ENCODE measurements at regions of chr3 and their contacts with region 1.

Region 1: GRCh38 chr3:27449530-27450150 is 34.5 kb downstream of the SLC4A7 start:
- DNase-seq: no peak
- H3K4me3 ChIP-seq: no peak overlapping the region
- H3K27ac ChIP-seq: no peak overlapping the region
- H3K4me1 ChIP-seq: peaks cover 0 to 12% (median 0%) of the 10 kb centered on the region in 4 donors
- H3K27me3 ChIP-seq: no peaks in the 10 kb centered on the region
- CTCF ChIP-seq: no peak
- EP300 ChIP-seq: no peak
- POLR2A ChIP-seq: no peak

Region 2: DNA sequence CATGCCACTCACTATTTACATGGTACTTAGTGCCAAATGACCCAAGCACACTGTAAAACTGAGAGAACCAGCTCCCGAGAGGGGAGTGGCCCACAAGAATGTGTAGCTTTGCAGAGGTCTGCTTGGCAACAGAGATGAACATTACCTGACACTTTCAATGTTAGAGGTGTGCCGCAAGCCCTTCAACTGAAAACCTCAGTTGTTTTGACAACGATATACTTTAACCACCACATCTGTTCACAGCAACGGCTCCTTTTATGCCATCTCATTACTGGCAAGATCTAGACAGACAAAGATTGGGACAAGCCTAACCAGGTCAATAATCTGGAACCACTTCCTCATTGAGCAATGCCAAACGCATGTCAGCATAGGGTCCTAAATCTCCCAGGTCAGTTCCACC is 104.1 kb before region 1 on chr3:
- in situ Hi-C with region 1: no loop called
- intact Hi-C with region 1: no loop called
- DNase-seq: peak; percentile 58
- H3K4me3 ChIP-seq: no peak overlapping the region
- H3K27ac ChIP-seq: peak overlapping the region; percentile 5 to 49 (median 22)
- H3K4me1 ChIP-seq: peaks cover 0 to 14% (median 2%) of the 10 kb centered on the region in 4 donors
- H3K27me3 ChIP-seq: no peaks in the 10 kb centered on the region
- CTCF ChIP-seq: no peak
- EP300 ChIP-seq: peak; percentile 69
- POLR2A ChIP-seq: no peak

Region 3: DNA sequence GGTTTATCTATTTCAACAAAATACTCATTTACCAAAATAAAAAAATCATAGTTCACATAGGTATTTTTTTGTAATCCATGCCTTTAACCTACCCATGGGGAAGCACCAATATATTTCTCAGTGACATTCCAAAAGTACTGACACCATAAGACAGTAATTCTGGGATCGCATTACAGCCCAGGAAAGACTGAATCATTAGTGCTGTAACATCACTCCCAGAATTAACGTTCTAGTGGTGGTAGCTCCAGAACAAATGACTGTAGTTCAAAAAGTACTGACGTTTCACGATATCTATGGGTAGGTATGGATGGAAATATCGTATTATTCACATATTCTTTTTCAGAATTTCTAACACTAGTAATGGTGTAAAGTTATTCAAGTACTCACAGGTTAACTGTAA is 26.2 kb before region 1 on chr3:
- in situ Hi-C with region 1: no loop called
- intact Hi-C with region 1: loop called (anchors 1 kb)
- DNase-seq: no peak
- H3K4me3 ChIP-seq: no peak overlapping the region
- H3K27ac ChIP-seq: no peak overlapping the region
- H3K4me1 ChIP-seq: no peaks in the 10 kb centered on the region
- H3K27me3 ChIP-seq: no peaks in the 10 kb centered on the region
- CTCF ChIP-seq: no peak
- EP300 ChIP-seq: no peak
- POLR2A ChIP-seq: no peak

Region 4: DNA sequence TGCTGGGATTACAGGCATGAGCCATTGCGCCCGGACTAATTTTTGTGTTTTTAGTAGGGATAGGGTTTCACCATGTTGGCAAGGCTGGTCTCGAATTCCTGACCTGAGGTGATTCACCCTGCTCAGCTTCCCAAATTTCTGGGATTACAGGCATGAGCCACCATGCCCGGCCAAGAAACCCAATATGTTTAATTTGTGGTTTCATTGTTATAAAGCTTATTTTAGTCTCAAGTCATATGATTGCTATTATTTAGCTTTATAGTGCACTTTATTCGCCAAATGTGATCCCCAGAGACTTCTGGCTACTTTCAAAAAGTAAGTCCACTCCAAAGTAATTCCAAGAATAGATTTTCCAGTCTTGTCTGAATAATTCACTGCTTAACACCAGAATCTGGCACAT is 53.9 kb after region 1 on chr3:
- in situ Hi-C with region 1: no loop called
- intact Hi-C with region 1: no loop called
- DNase-seq: no peak
- H3K4me3 ChIP-seq: no peak overlapping the region
- H3K27ac ChIP-seq: no peak overlapping the region
- H3K4me1 ChIP-seq: peaks cover 0 to 6% (median 0%) of the 10 kb centered on the region in 4 donors
- H3K27me3 ChIP-seq: no peaks in the 10 kb centered on the region
- CTCF ChIP-seq: no peak
- EP300 ChIP-seq: no peak
- POLR2A ChIP-seq: no peak

Region 5: DNA sequence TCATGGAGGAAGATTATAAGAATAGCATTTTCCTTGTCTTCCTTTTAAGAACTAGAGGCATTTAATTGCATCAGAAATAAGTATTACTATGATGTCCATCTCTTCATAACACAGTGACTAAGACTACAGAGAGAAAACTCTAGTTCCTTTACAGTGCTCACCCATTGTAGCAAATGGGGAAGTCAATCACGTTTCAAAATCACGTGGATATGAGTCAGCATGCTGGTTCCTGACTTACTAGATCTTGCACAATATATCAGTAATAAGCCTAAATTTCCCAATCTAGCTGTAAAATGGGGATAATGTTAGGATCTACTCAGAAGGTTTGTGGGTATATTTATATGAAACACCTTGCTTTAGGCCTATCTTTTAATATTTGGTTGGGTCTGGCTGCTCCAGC is 527.3 kb after region 1 on chr3:
- in situ Hi-C with region 1: no loop called
- intact Hi-C with region 1: no loop called
- DNase-seq: no peak
- H3K4me3 ChIP-seq: no peak overlapping the region
- H3K27ac ChIP-seq: no peak overlapping the region
- H3K4me1 ChIP-seq: no peaks in the 10 kb centered on the region
- H3K27me3 ChIP-seq: no peaks in the 10 kb centered on the region
- CTCF ChIP-seq: no peak
- EP300 ChIP-seq: no peak
- POLR2A ChIP-seq: no peak